Prostate gland (tissue), 2 donors: ENCODE measurements at regions of chr17 and their contacts with region 1.

Region 1: DNA sequence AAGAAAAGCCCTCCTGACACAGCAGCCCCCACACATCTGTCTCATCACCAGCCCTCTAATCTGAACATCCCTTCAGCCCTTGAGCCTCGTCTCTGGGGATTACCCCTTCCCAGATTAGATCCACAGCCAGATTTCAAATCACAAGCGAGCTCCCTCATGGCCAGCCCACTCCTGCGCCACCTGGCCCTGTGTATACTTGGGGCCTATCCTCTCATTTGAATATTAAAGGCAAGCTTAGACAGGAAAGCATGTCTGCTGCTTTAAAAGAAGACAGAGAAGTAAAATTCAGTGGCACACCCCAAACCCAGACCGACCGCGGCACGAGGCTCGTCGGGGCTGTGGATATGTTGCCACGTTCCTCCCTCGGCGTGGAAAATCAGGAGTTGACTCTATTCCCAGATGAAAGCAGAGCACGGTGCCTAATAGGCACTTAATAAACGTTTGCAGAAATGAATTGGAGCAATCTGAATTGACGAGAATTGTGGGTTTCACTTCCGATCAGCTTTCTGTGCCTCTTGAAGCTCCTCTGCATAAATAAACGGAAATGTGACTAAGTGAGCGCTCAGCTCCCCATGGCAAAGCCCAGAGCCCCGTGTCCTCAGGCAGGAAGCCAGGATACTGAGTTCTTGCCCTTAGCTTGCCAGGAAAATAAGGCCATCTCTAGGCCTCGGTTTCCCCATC is 108.0 kb downstream of the CCDC182 start:
- DNase-seq: no peak
- H3K4me3 ChIP-seq: no peak overlapping the region
- H3K27ac ChIP-seq: no peak overlapping the region
- H3K4me1 ChIP-seq: no peaks in the 10 kb centered on the region
- H3K27me3 ChIP-seq: no peaks in the 10 kb centered on the region
- CTCF ChIP-seq: no peak
- POLR2A ChIP-seq: no peak

Region 2: DNA sequence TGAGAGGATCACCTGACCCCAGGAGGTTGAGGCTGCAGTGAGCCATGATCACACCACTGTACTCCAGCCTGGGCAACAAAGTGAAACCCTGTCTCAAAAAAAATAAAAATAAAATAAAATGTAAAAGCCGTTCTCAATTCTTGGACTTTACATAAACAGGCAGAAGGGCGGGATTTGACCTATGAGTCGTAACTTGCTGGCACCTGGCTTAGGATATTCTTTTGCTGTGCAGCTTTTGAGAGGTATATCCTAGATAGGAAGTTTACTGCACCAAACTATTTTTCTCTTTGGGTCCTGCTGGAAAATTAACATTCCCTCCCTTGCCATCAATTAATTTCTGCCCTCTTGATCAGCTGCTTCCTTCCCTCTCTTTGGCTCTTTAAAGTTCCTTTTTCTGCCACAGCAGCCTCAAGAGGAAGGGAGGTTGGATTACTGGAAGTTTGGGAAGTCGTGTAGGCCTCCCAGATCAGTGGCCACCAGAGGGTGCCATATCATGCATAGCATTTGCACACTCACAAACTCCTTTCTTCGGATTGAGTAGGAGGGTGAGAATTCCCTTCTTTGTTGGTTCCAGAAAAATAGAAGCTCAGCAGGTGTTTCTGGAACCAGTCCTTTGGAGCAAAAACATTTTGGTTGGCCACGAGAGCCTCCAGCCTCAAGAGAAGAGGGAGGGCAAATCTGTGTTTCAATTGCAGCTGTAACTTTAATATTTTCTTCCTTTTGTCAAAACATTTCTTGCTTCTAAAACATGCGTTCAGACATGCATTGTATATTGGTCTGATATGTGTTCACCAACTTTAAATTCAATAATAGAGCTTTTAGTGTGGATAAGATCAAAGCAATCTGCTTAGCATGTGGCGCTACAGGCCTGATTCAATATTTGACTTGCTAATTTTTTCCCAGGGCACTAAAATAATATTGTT is 39.3 kb before region 1 on chr17:
- intact Hi-C with region 1: loop called (anchors 2 kb)
- DNase-seq: peak; percentile 57
- H3K4me3 ChIP-seq: no peak overlapping the region
- H3K27ac ChIP-seq: no peak overlapping the region
- H3K4me1 ChIP-seq: no peaks in the 10 kb centered on the region
- H3K27me3 ChIP-seq: no peaks in the 10 kb centered on the region
- CTCF ChIP-seq: peak; percentile 60 to 82 (median 74)
- POLR2A ChIP-seq: no peak